ENCODE measurements at regions of chr20 and their contacts with region 1.

Region 1: DNA sequence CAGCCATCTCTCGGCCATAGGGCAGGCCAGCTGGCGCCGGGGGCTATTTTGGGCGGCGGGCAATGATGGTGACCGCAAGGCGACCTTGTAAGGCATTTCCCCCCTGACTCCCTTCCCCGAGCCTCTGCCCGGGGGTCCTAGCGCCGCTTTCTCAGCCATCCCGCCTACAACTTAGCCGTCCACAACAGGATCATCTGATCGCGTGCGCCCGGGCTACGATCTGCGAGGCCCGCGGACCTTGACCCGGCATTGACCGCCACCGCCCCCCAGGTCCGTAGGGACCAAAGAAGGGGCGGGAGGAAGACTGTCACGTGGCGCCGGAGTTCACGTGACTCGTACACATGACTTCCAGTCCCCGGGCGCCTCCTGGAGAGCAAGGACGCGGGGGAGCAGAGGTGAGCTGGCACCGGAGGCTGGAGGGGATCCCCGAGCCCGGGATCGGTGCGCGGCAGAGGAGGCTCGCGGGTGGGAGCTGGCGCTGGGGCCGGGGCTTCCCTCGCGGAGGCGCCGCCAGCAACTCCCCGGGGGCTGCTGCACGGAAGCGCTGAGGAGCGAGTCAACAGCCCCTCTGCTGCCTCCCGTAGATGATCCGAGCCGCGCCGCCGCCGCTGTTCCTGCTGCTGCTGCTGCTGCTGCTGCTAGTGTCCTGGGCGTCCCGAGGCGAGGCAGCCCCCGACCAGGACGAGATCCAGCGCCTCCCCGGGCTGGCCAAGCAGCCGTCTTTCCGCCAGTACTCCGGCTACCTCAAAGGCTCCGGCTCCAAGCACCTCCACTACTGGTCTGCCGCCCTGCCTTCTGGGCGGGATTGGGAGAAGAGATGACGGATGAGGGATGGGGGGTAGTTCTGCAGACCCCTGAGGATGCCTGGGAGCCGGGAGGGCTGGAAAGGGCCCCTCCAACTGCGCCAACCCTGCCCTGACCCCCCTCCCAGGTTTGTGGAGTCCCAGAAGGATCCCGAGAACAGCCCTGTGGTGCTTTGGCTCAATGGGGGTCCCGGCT is at the starts of genes CTSA and NEURL2:
- DNase-seq: peak; percentile 88
- H3K4me3 ChIP-seq: peak within 1 kb of the TSS; percentile 47 to 81 (median 57)
- H3K27ac ChIP-seq: peak within 1 kb of the TSS; percentile 50
- H3K4me1 ChIP-seq: peaks cover 22% of the 10 kb centered on the region
- H3K27me3 ChIP-seq: no peaks in the 10 kb centered on the region
- CTCF ChIP-seq: no peak
- POLR2A ChIP-seq: peak; percentile 74
- total RNA-seq, gene CTSA: 156 and 169 TPM in 2 replicates
- total RNA-seq, gene NEURL2: 5.4 and 6.5 TPM in 2 replicates

Region 2: DNA sequence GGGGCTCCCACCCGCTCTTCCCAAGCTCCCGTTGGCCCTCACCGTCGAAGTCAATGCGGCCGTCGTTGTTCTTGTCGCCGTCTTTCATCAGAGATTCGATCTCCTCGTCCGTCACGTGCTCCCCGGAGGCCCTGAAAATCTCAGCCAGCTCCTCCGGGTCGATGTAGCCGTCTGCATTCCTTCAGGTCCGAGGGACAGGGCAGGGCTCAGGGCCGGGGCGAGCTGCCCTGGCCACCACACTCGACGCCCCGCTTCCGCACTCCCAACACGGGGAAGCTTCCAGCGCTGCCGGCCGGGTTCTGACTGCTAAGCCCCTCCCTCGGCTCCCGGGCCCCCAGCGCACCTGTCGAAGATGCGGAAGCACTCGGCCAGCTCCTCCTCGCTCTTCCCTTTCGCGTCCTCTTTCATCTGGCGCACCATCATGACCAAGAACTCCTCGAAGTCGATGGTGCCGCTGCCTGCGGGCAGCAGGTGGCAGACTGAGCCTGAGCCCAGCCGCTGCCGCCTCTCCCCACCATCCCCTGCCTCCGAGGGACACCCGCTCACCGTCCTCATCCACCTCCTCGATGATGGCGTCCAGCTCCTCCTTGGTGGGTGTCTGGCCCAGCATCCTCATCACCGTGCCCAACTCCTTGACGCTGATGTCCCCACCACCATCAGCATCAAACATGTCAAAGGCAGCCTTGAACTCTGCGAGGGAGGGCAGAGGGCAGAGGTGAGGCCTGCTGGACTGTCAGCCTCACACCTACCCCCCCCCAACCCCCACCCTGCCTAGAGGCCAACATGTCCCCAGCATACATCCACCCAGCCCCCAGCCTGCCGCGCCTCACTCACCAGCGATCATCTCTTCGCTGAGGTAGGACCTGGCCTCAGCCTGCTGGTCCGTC is 67.1 kb before region 1 on chr20:
- CTCF ChIA-PET with region 1: interaction called, 15 read pairs
- POLR2A ChIA-PET with region 1: interaction called, 3 read pairs
- dilution Hi-C with region 1: no loop called
- intact Hi-C with region 1: loop called (anchors 1 kb)
- DNase-seq: peak; percentile 46
- H3K4me3 ChIP-seq: peak overlapping the region in 1 of 3 experiments; percentile 17
- H3K27ac ChIP-seq: no peak overlapping the region
- H3K4me1 ChIP-seq: peaks cover 4% of the 10 kb centered on the region
- H3K27me3 ChIP-seq: peaks cover 11 to 16% of the 10 kb centered on the region in 2 experiments
- CTCF ChIP-seq: peak; percentile 40 to 75
- POLR2A ChIP-seq: no peak

Region 3: GRCh38 chr20:45857114-45857881 is 34.0 kb before region 1 on chr20 and contains the starts of genes ACOT8 and ZSWIM3:
- CTCF ChIA-PET with region 1: interaction called, 10 read pairs
- POLR2A ChIA-PET with region 1: no interaction called
- dilution Hi-C with region 1: no loop called
- intact Hi-C with region 1: loop called (anchors 2 kb)
- DNase-seq: peak; percentile 99
- H3K4me3 ChIP-seq: peak within 1 kb of the TSS; percentile 32 to 78 (median 66)
- H3K27ac ChIP-seq: peak within 1 kb of the TSS; percentile 51
- H3K4me1 ChIP-seq: peaks cover 12% of the 10 kb centered on the region
- H3K27me3 ChIP-seq: no peaks in the 10 kb centered on the region
- CTCF ChIP-seq: no peak
- POLR2A ChIP-seq: peak; percentile 91
- total RNA-seq, gene ACOT8: 15.5 and 15.8 TPM in 2 replicates
- total RNA-seq, gene ZSWIM3: 4.2 and 4.4 TPM in 2 replicates

Region 4: DNA sequence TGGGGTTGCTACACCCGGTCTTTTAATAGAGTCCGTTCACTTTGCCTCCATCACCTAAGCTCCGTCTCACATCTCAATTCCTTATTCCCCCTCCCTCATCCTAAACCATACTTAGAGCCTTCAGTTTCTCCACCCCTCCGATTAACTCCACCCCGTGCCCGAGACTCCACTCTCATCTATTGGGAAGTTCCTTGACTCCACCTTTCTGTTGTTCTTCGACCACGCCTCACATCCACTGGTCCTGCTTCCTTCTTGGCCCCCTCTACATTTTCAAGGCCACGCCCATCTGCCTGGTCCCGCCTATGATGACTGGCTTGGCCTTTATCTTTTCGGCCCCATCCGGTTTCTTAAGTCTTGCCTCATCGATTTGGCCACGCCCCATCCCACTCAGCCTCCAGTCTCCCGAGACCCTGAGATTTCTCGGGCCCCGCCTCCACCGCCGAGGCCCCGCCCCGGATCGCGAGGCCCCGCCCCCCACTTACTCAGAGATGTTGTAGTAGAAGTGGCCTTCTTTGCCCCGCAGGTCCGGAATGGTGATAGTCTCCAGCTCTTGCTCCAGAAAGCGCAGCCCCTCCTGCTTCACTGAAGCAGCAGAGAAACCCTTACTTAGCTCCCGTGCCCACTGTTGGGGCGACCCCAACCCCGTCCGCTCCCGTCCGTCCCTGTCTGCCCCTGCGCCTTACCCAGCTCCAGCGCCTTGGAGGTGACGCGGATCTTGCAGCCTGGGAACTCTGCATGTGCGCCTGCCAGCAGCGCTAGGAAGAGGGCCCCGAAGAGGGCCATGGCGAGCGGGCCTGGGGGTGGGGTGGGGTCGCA is 19.6 kb after region 1 on chr20:
- CTCF ChIA-PET with region 1: interaction called, 22 read pairs
- POLR2A ChIA-PET with region 1: interaction called, 3 read pairs
- dilution Hi-C with region 1: no loop called
- intact Hi-C with region 1: loop called (anchors 1 kb)
- DNase-seq: peak; percentile 100
- H3K4me3 ChIP-seq: peak overlapping the region; percentile 6 to 62 (median 37)
- H3K27ac ChIP-seq: peak overlapping the region; percentile 43
- H3K4me1 ChIP-seq: peaks cover 28% of the 10 kb centered on the region
- H3K27me3 ChIP-seq: no peaks in the 10 kb centered on the region
- CTCF ChIP-seq: no peak
- POLR2A ChIP-seq: peak; percentile 30

Region 5: GRCh38 chr20:45963059-45964005 is 72.0 kb after region 1 on chr20:
- CTCF ChIA-PET with region 1: interaction called, 35 read pairs
- POLR2A ChIA-PET with region 1: no interaction called
- dilution Hi-C with region 1: no loop called
- intact Hi-C with region 1: loop called (anchors 1 kb)
- DNase-seq: peak; percentile 36
- H3K4me3 ChIP-seq: no peak overlapping the region
- H3K27ac ChIP-seq: no peak overlapping the region
- H3K4me1 ChIP-seq: no peaks in the 10 kb centered on the region
- H3K27me3 ChIP-seq: no peaks in the 10 kb centered on the region
- CTCF ChIP-seq: peak; percentile 24 to 25
- POLR2A ChIP-seq: no peak

Region 6: GRCh38 chr20:46923550-46923949 is 1032.3 kb after region 1 on chr20:
- CTCF ChIA-PET with region 1: no interaction called
- POLR2A ChIA-PET with region 1: no interaction called
- dilution Hi-C with region 1: no loop called
- intact Hi-C with region 1: no loop called
- DNase-seq: no peak
- H3K4me3 ChIP-seq: no peak overlapping the region
- H3K27ac ChIP-seq: no peak overlapping the region
- H3K4me1 ChIP-seq: no peaks in the 10 kb centered on the region
- H3K27me3 ChIP-seq: no peaks in the 10 kb centered on the region
- CTCF ChIP-seq: no peak
- POLR2A ChIP-seq: no peak

Measured in endothelial cell of umbilical vein (primary cell).